H1 (cell line): ENCODE measurements at regions of chr17 and their contacts with region 1.

Region 1: DNA sequence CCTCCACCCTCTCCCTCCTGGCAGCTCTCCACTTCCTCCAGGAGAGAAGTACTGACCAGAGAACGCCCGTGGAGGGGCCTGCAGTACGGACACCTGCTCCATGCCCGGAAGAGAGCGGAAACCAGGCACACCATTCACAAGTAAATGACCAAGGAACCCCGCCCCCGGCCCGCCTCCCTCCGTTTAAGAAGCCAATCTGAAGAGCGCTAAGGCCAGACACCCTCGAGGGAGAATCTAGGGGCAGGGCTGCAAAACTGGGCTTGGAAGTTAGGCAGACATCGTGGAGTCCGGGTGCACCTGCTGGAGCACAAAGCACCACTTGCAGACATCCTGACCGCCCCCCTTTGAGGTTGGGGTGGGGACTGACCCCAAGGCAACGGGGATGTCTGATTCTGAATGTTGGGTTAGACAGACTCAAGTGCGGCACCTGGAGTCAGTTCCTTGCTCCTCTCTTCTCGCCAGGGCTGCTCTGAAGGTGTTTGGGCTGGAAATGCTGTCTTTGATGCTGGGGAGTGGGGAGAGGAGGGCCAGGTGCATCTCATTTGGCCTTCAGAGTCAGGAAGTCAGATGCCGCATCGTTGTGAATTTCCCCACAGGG is 964 bp upstream of the FAAP100 start:
- DNase-seq: peak; percentile 58 to 83
- H3K4me3 ChIP-seq: peak overlapping the region; percentile 69 to 94 (median 84)
- H3K27ac ChIP-seq: peak overlapping the region; percentile 13; the same call in 1 of the 2 replicates
- H3K4me1 ChIP-seq: peaks cover 3 to 17% (median 8%) of the 10 kb centered on the region in 4 experiments
- H3K27me3 ChIP-seq: no peaks in the 10 kb centered on the region
- CTCF ChIP-seq: peak in 1 of 3 experiments; percentile 19; a peak in 1 of 4 replicates
- EP300 ChIP-seq: no peak
- POLR2A ChIP-seq: peak in 1 of 2 experiments; percentile 63; a peak in 1 of 3 replicates
- RAD21 ChIP-seq: no peak

Region 2: DNA sequence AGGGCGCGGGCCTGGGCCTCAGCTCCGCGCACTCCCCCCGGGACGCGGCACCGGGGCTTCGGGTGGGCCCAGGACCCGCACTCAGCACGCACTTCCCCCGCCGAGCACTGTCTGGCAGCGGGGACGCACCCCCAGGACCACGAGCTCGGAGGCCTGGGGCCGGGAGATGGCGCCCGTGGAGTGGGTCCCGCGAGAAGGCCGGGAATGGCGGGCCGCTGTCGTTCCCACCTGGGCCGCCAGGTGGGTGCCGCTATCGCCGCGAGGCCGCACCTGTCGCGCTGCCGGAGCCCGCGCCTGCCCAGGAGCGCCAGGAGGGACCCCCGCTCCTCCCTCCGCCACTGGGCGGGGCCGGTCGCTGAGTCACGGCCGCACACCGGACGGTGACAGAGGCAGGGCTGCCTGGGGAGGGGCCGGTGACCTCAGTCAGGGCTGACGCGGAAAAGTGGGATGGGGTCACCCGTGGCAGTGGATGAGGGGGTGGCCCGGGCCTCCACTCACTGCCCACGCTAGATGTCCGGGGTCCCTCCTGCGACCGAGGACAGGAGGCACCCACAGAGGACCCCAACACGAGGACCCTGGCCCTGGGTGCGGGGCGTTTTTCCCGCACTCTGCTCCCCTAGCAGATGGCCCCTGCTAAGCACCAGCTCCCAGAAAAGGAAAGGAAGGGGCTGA is 33.7 kb before region 1 on chr17:
- CTCF ChIA-PET with region 1: no interaction called
- POLR2A ChIA-PET with region 1: interaction called, 19 read pairs
- DNase-seq: peak in 1 of 2 experiments; percentile 69
- H3K4me3 ChIP-seq: peak overlapping the region; percentile 43 to 73 (median 46)
- H3K27ac ChIP-seq: no peak overlapping the region
- H3K4me1 ChIP-seq: peaks cover 0 to 54% (median 30%) of the 10 kb centered on the region in 4 experiments; a peak in 6 of 7 replicates
- H3K27me3 ChIP-seq: peaks cover 0 to 43% (median 27%) of the 10 kb centered on the region in 4 experiments; a peak in 5 of 7 replicates
- CTCF ChIP-seq: peak; percentile 30 to 60 (median 51)
- EP300 ChIP-seq: no peak
- POLR2A ChIP-seq: no peak
- RAD21 ChIP-seq: peak in 1 of 2 experiments; percentile 35; a peak in 3 of 4 replicates

Region 3: GRCh38 chr17:81537343-81537855 is 15.7 kb before region 1 on chr17:
- CTCF ChIA-PET with region 1: interaction called, 8 read pairs
- POLR2A ChIA-PET with region 1: interaction called, 50 read pairs
- DNase-seq: peak in 1 of 2 experiments; percentile 86
- H3K4me3 ChIP-seq: peak overlapping the region in 1 of 4 experiments; percentile 51; a peak in 4 of 8 replicates
- H3K27ac ChIP-seq: no peak overlapping the region
- H3K4me1 ChIP-seq: peaks cover 0 to 11% (median 5%) of the 10 kb centered on the region in 4 experiments; a peak in 5 of 7 replicates
- H3K27me3 ChIP-seq: peaks cover 8 to 28% (median 24%) of the 10 kb centered on the region in 4 experiments; a peak in 6 of 7 replicates
- CTCF ChIP-seq: peak; percentile 91 to 97 (median 94)
- EP300 ChIP-seq: no peak
- POLR2A ChIP-seq: no peak; a peak in 1 of 3 replicates
- RAD21 ChIP-seq: peak; percentile 86 to 91

Region 4: DNA sequence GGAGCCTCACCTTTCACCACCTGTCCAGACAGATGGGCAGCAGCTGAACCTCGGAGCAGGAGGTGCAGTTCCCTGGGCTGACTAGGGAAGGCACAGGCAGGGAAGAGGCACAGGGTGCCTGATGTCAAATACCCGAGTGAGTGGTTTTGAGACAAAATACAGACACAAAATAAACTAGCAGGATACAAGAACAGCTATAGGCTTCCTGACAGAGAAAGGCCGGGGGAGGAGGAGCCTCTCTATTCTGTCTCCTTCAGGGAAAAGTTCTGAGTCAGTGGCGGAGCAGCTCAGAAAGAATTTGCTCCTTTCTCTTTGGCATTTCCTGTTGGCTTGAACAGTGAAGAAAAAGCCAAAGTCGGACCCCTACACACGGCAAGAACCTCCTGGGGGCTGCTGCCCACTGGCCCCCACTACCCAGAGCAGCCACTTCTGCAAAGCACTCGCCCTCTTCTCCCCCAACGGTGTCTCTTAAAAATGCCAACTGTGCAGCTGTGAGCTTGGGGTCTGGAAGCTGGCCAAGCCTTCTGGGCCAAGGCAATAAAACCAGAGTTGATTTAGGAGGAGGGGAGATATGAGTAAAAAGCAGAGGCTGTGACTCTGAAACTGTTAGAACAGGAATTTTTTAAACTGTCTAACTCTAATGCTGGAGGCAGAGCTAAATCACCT is 13.5 kb after region 1 on chr17:
- CTCF ChIA-PET with region 1: interaction called, 10 read pairs
- POLR2A ChIA-PET with region 1: interaction called, 11 read pairs
- DNase-seq: no peak
- H3K4me3 ChIP-seq: no peak overlapping the region
- H3K27ac ChIP-seq: no peak overlapping the region
- H3K4me1 ChIP-seq: no peaks in the 10 kb centered on the region
- H3K27me3 ChIP-seq: no peaks in the 10 kb centered on the region
- CTCF ChIP-seq: no peak
- EP300 ChIP-seq: no peak
- POLR2A ChIP-seq: no peak
- RAD21 ChIP-seq: no peak